Ovary (tissue), 10 donors: ENCODE measurements at regions of chr9 and their contacts with region 1.

Region 1: DNA sequence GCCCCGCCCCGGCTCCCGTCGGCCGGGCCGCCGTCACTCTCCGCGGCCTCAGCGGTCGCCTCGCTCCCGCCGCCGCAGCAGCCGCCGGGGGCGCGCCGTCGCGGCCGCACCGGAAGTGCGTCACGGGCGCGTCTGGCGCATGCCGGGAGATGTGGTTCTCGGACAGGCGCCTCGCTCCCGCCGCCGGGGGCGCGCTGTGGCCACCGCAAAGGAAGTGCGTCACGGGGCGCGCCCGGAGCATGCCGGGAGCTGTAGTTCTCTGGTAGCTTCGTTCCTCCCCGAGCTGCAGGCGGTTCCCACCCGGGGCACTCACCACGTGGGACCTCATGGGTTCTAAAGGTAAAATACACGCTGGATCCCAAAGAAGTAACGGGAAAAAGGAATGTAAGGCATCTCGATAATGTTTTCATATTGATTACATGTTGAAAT is at the start of gene UBAC1:
- DNase-seq: peak; percentile 94 to 97 (median 95)
- H3K4me3 ChIP-seq: peak within 1 kb of the TSS; percentile 98
- H3K27ac ChIP-seq: peak within 1 kb of the TSS; percentile 39 to 42
- H3K4me1 ChIP-seq: peaks cover 4% of the 10 kb centered on the region
- H3K27me3 ChIP-seq: no peaks in the 10 kb centered on the region
- CTCF ChIP-seq: peak in 2 of 3 donors; percentile 78 to 92
- EP300 ChIP-seq: peak; percentile 56
- POLR2A ChIP-seq: no peak
- total RNA-seq, gene UBAC1: 29.4 to 42.0 (median 34.9) TPM

Region 2: GRCh38 chr9:135701959-135702721 is 259.2 kb before region 1 on chr9 and contains the start of gene KCNT1:
- intact Hi-C with region 1: loop called in 1 of 4 experiments (anchors 10 kb)
- DNase-seq: peak; percentile 63 to 88 (median 75)
- H3K4me3 ChIP-seq: peak within 1 kb of the TSS; percentile 25
- H3K27ac ChIP-seq: peak within 1 kb of the TSS; percentile 9 to 47
- H3K4me1 ChIP-seq: peaks cover 14% of the 10 kb centered on the region
- H3K27me3 ChIP-seq: no peaks in the 10 kb centered on the region
- CTCF ChIP-seq: peak; percentile 80 to 98 (median 82)
- EP300 ChIP-seq: no peak
- POLR2A ChIP-seq: no peak
- total RNA-seq, gene KCNT1: 0.83 to 12.0 (median 6.4) TPM

Region 3: DNA sequence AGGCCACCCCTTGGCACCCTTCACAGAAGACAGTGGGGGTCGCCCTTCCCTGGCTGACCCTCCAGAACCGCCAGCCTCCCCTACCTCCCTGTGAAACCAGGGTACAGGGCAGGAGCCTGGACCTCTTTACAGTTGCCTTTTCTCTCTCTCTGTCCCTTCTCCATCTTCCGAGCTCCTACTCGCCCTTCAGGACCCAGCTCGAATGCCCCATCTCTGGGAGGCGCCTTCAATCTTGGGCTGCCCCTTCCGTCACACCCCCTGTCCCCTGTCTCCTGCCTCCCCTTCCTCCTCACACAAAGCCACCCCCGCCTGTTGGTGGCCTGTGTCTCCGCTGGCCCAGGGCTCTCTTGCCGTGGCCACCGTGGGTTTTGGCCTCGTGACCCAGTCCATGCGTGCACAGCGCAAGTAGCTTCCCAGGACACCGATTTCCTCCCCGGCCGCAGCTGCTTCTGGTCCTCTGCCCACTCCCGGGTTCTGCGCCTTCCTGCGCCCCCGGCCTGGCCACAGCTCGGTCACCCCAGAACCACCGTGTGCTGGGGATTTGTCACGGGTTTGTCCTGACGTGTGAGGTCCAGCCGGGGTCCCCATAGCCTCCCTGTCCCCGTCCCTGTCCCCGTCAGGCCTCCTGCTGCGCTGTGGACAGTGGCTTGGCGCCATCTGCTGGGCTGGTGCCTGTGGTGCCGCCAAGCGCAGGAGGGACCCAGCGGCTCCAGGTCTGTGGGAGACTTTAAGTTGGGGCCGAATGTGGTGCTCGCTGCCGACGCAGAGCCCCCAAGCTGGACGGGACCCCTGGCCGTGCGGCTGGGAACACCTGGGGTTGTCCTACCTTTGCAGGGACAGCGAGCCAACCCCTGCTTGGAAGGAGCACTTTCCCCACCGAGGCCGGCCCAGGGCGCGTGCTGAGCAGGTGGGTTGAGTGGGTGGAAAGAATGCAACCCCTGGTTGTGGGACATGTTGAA is 161.4 kb after region 1 on chr9:
- intact Hi-C with region 1: loop called in 3 of 4 experiments (anchors 2 to 5 kb)
- DNase-seq: peak; percentile 67 to 85 (median 81)
- H3K4me3 ChIP-seq: no peak overlapping the region
- H3K27ac ChIP-seq: no peak overlapping the region
- H3K4me1 ChIP-seq: peaks cover 4% of the 10 kb centered on the region
- H3K27me3 ChIP-seq: no peaks in the 10 kb centered on the region
- CTCF ChIP-seq: peak; percentile 97 to 99 (median 99)
- EP300 ChIP-seq: no peak
- POLR2A ChIP-seq: peak; percentile 28

Region 4: GRCh38 chr9:136275655-136276429 is 314.6 kb after region 1 on chr9:
- intact Hi-C with region 1: loop called in 2 of 4 experiments (anchors 5 to 10 kb)
- DNase-seq: no peak
- H3K4me3 ChIP-seq: no peak overlapping the region
- H3K27ac ChIP-seq: no peak overlapping the region
- H3K4me1 ChIP-seq: no peaks in the 10 kb centered on the region
- H3K27me3 ChIP-seq: no peaks in the 10 kb centered on the region
- CTCF ChIP-seq: no peak
- EP300 ChIP-seq: no peak
- POLR2A ChIP-seq: no peak